Heart right ventricle (tissue), 16 donors: ENCODE measurements at regions of chr2 and their contacts with region 1.

Region 1: GRCh38 chr2:108583903-108584520 is 49.7 kb downstream of the LIMS1 start:
- DNase-seq: peak in 1 of 2 donors; percentile 85
- ATAC-seq: peak; percentile 71 to 81 (median 76)
- H3K4me3 ChIP-seq: no peak overlapping the region
- H3K27ac ChIP-seq: peak overlapping the region in 3 of 10 donors; percentile 29 to 52 (median 29)
- H3K4me1 ChIP-seq: peaks cover 13 to 76% (median 55%) of the 10 kb centered on the region in 9 donors
- H3K27me3 ChIP-seq: no peaks in the 10 kb centered on the region
- CTCF ChIP-seq: peak; percentile 53 to 88 (median 84)

Region 2: GRCh38 chr2:107936433-107937359 is 647.3 kb before region 1 on chr2:
- intact Hi-C with region 1: loop called in 1 of 10 experiments (anchors 10 kb)
- DNase-seq: no peak
- ATAC-seq: no peak
- H3K4me3 ChIP-seq: no peak overlapping the region
- H3K27ac ChIP-seq: no peak overlapping the region
- H3K4me1 ChIP-seq: no peaks in the 10 kb centered on the region
- H3K27me3 ChIP-seq: peaks cover 0 to 13% (median 0%) of the 10 kb centered on the region in 7 donors
- CTCF ChIP-seq: peak; percentile 24 to 56 (median 45)

Region 3: DNA sequence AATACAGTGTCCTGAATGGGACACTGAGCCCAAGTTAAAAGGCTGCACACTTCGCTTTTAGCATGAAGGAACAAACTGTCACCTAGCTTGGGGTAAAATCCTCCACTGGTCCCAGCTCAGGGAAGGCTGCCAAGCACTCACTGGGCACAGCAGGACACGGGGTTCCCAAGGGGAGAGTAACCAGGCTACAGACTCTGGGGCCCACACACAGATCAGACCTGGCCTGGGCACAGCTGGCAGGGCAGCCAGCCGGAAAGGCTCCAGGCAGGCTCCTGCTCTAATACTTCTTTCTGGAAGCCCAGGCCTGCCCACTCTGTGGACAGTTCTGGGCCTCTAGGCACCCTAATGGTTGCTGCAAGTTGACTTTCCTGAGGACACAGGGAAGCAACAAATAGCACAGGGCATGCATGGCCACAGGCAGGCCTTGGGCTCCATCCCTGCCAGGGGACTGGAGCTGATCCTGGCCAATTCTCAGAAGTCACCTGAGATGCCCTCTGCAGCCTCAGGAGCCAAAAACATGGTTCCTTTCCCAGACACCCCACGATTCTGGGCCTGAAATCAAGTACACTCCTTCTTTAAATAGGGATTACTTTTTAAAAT is 363.0 kb before region 1 on chr2:
- intact Hi-C with region 1: loop called in 3 of 10 experiments (anchors 2 to 10 kb)
- DNase-seq: peak in 1 of 2 donors; percentile 62
- ATAC-seq: peak in 6 of 8 donors; percentile 59 to 99 (median 86)
- H3K4me3 ChIP-seq: no peak overlapping the region
- H3K27ac ChIP-seq: peak overlapping the region in 2 of 10 donors; percentile 15 to 31
- H3K4me1 ChIP-seq: peaks cover 0 to 11% (median 0%) of the 10 kb centered on the region in 9 donors
- H3K27me3 ChIP-seq: no peaks in the 10 kb centered on the region
- CTCF ChIP-seq: no peak

Region 4: DNA sequence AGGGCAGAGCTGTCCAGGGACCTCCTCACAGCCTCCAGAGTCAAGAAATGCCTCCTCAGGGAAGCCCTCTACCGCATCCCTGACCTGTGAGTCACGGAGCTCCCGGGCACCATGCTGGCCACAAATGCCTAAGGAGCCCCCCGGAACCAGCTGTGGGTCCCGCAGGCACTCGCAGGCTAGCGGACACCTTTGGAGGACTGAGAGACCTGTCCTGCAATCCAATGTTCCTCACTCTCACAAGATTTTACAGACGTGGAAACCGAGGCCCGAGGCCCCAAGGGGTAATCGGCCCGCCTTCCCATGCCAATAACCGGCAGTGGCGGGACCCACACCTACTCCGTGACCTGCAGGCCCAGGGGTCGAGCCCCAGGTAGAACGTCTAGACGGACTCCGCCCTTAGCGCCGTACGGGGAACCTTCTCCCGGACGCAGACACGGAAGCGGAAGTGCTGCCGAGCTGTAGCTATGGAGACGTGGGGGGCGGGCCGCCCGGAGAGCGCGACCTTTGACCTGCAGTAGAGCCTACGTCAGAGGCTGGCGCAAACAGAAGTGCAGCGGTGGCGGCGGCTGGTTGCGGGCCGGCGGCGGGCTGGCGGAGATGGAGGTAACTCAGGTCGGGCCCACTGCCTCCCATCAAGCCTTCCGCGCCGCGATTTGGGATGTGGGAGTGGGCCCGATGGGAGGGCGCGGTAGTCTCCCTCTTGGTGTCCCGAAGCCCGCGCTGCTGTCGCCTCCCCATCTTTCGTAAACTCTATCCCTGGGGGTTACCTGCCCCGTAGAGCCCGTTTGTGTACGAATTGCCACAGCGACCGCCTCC is 135.1 kb before region 1 on chr2 and contains the start of gene GCC2:
- intact Hi-C with region 1: loop called in 3 of 10 experiments (anchors 10 kb)
- DNase-seq: peak; percentile 94 to 95
- ATAC-seq: peak; percentile 99 to 100 (median 99)
- H3K4me3 ChIP-seq: peak within 1 kb of the TSS; percentile 55 to 96 (median 78)
- H3K27ac ChIP-seq: peak within 1 kb of the TSS; percentile 39 to 94 (median 86)
- H3K4me1 ChIP-seq: peaks cover 0 to 22% (median 16%) of the 10 kb centered on the region in 9 donors
- H3K27me3 ChIP-seq: no peaks in the 10 kb centered on the region
- CTCF ChIP-seq: no peak
- total RNA-seq, gene GCC2: 22.2 to 31.8 (median 27.3) TPM

Region 5: DNA sequence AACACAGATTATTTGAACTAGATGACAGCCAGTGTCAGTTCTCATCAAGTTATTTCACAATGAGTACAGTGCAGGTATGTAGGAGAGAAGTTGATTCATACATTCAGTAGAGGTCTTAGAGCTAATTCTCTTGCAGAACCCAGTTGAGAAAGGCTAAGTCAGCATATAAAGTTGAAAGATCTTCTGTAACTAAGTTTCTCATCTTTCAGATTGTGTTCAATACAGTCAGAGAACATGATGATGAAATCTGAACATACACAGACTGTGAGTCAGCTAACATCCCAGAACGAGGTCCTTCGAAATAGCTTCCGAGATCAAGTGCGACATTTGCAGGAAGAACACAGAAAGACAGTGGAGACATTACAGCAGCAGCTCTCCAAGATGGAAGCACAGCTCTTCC is 91.6 kb before region 1 on chr2:
- intact Hi-C with region 1: loop called in 1 of 10 experiments (anchors 10 kb)
- DNase-seq: no peak
- ATAC-seq: no peak
- H3K4me3 ChIP-seq: no peak overlapping the region
- H3K27ac ChIP-seq: no peak overlapping the region
- H3K4me1 ChIP-seq: no peaks in the 10 kb centered on the region
- H3K27me3 ChIP-seq: no peaks in the 10 kb centered on the region
- CTCF ChIP-seq: no peak

Region 6: DNA sequence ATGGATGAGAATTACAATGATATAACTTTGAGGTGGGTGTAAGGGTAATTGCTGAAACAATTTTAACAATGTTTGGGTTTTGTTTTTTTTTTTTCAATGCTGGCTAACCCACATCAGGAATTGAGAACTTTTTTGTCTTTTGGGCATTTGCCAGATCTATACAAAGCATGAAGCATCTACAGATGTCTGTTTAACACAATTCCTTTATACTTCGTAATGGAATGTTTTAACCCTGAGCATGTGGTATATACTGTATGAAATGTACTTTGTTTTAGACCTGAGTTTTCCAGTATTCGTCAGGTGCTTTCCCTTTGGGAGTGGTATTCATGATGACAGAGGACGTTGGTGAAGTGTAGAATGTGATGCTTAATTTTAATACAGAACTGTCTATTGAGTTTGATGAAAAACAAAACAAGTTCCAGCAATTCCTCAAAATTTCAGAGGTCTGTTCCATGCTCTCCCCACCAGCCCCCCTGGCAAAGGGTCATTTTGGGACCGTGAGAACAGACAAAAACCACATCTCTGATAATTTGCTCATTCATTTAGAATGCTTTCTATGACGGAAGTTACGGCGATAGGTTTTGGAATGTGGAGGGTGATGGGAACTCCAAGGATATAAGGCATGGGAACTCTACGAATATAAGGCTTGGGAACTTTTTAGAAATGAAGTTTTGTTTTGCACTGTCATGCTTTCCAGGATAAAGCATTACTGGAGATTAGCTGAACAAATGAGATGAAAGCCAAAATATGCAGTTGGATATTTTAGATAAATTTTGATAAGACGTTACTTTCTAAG is 35.6 kb before region 1 on chr2:
- intact Hi-C with region 1: loop called in 1 of 10 experiments (anchors 5 kb)
- DNase-seq: no peak
- ATAC-seq: no peak
- H3K4me3 ChIP-seq: no peak overlapping the region
- H3K27ac ChIP-seq: peak overlapping the region in 1 of 10 donors; percentile 2
- H3K4me1 ChIP-seq: peaks cover 8 to 29% (median 18%) of the 10 kb centered on the region in 9 donors
- H3K27me3 ChIP-seq: no peaks in the 10 kb centered on the region
- CTCF ChIP-seq: no peak

Region 7: DNA sequence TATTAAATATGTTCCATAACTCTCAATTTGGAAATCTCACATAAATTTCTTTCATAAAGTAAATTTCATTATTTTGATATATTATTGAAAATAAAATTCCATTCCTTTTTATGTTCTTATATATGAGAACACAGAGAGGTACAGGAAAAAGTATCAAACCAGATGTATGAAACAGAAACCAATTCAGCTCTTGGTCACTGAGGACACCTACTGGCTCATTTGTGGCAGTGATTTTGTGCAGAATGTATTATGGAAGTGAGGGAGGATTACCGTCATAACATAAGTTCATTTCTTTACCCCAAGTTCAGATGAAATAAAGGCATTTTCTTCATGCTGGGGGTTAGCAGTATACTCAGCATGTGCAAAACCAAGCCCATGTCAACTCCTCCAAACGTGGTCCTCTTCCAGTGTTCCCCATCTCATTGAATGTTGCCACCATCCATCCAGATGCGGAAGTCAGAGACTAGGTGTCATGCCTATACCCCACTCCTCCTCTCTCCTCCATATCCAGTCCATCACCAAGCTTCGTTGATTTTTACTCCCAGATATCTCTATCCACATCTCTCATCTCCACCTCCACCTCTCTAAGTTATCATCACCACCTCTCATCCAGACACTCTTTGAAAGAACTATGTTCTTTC is 1573.3 kb after region 1 on chr2:
- intact Hi-C with region 1: no loop called
- DNase-seq: peak in 1 of 2 donors; percentile 21
- ATAC-seq: peak in 7 of 8 donors; percentile 61 to 90 (median 86)
- H3K4me3 ChIP-seq: no peak overlapping the region
- H3K27ac ChIP-seq: peak overlapping the region in 2 of 10 donors; percentile 38 to 61
- H3K4me1 ChIP-seq: peaks cover 0 to 13% (median 0%) of the 10 kb centered on the region in 9 donors
- H3K27me3 ChIP-seq: no peaks in the 10 kb centered on the region
- CTCF ChIP-seq: peak; percentile 56 to 90 (median 80)